MCF 10A (cell line): ENCODE measurements at regions of chr3 and their contacts with region 1.

Region 1: DNA sequence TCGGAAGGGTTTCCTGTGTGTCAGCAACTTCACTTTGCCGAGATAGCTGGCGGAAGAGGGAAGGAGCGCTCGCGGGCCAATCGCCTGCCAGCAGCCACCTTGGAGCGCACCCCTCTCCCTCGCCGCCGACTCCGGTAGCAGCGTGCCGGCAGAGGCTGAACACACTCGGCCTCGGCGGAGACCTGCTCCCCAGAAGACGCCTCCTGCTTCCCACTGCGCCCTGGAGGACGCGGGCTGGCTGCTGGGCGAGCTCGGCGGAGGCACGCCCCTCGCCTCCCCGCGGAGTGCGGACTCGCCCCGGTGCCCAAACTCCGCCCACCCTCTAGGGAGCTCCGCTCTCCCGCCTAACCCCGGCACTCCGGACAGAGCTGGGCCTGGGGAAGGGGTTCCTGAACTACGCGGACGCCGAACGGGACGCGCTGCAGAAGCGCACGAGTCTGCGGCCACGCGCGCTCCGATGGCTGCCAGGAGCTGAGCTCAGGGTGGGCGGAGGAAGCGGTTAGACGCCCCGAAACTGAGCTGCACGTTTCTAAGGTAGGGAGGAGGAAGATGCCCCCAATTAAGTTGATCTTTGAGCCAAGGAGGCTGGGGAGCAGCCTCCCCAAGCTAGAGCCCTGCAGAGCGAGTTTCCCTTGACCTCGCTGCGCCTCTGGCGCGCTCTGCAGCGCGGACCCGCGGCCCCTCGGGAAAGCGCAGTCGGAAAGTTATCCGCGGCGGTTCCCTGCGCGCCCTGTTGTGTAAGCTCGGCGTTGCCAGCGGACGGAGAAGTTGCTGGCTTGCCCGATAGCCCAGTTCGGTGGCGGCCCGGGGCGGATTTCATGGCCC is at the start of gene P2RY1:
- DNase-seq: peak; percentile 75
- H3K4me3 Mint-ChIP-seq: peak within 1 kb of the TSS; percentile 96
- H3K27ac Mint-ChIP-seq: peak within 1 kb of the TSS; percentile 54
- H3K4me1 Mint-ChIP-seq: peaks cover 8% of the 10 kb centered on the region
- H3K27me3 Mint-ChIP-seq: no peaks in the 10 kb centered on the region
- CTCF ChIP-seq: peak; percentile 12
- total RNA-seq, gene P2RY1: 0.28 and 0.49 TPM in 2 replicates

Region 2: GRCh38 chr3:152870027-152870426 is 35.0 kb after region 1 on chr3:
- CTCF ChIA-PET with region 1: interaction called, 4 read pairs
- POLR2A ChIA-PET with region 1: interaction called, 12 read pairs
- intact Hi-C with region 1: loop called (anchors 2 kb)
- DNase-seq: peak; percentile 75
- H3K4me3 Mint-ChIP-seq: no peak overlapping the region
- H3K27ac Mint-ChIP-seq: peak overlapping the region; percentile 65
- H3K4me1 Mint-ChIP-seq: peaks cover 8% of the 10 kb centered on the region
- H3K27me3 Mint-ChIP-seq: no peaks in the 10 kb centered on the region
- CTCF ChIP-seq: no peak

Region 3: DNA sequence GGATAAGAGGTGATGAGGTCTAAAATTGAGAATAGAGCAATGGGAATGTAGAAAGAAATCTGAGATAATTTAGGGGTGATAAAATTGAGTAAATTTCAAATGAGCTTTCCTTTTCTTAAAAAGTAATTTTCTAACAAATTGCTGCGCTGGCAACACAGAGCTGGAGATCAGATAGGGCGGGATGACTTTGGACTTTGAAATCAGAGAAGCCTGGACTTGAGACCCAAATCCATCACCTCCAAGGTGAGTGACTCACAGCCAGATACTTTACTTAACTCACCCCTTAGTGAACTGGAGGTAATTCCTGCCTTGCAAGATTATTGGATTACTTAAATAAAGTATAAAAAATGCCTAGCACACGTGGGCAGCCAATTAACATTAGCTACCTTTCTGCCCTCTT is 80.7 kb after region 1 on chr3:
- CTCF ChIA-PET with region 1: no interaction called
- POLR2A ChIA-PET with region 1: no interaction called
- intact Hi-C with region 1: no loop called
- DNase-seq: no peak
- H3K4me3 Mint-ChIP-seq: no peak overlapping the region
- H3K27ac Mint-ChIP-seq: no peak overlapping the region
- H3K4me1 Mint-ChIP-seq: no peaks in the 10 kb centered on the region
- H3K27me3 Mint-ChIP-seq: no peaks in the 10 kb centered on the region
- CTCF ChIP-seq: no peak

Region 4: GRCh38 chr3:152943645-152944044 is 108.7 kb after region 1 on chr3:
- CTCF ChIA-PET with region 1: no interaction called
- POLR2A ChIA-PET with region 1: no interaction called
- intact Hi-C with region 1: no loop called
- DNase-seq: peak; percentile 42
- H3K4me3 Mint-ChIP-seq: no peak overlapping the region
- H3K27ac Mint-ChIP-seq: peak overlapping the region; percentile 28
- H3K4me1 Mint-ChIP-seq: peaks cover 18% of the 10 kb centered on the region
- H3K27me3 Mint-ChIP-seq: no peaks in the 10 kb centered on the region
- CTCF ChIP-seq: no peak

Region 5: DNA sequence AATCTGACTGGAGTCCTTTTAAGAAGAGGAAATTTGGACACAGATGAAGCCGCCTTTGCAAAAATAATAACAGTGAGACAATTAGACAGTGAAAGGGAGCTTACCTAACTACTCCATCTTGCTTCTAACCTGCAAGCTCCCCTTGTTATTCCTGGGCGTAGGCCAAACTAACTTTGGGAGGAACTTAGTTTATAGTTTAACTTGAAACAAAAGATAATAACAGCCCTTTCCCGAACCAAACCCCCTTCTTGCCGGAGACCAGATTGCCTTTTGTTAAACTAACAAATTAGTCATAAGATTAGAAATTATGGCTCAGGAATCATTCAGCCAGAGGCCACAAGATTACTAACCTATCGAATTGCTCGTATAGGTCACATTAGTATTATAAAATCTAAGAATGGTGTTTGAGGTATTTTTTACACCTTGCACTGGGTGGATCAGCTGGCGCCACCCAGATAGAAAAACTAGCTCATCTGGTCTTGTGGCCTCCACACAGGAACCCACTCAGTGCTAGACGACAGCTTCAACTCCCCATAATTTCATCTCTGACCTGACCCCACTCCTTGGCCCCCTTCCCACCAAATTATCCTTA is 261.7 kb after region 1 on chr3:
- CTCF ChIA-PET with region 1: no interaction called
- POLR2A ChIA-PET with region 1: no interaction called
- intact Hi-C with region 1: no loop called
- DNase-seq: no peak
- H3K4me3 Mint-ChIP-seq: no peak overlapping the region
- H3K27ac Mint-ChIP-seq: no peak overlapping the region
- H3K4me1 Mint-ChIP-seq: no peaks in the 10 kb centered on the region
- H3K27me3 Mint-ChIP-seq: no peaks in the 10 kb centered on the region
- CTCF ChIP-seq: no peak